Motor neuron (in vitro differentiated cells): ENCODE measurements at regions of chr3 and their contacts with region 1.

Region 1: GRCh38 chr3:50192689-50193141 is 1.3 kb downstream of the GNAT1 start:
- ATAC-seq: peak in 7 of 8 experiments; percentile 12 to 46 (median 32)
- H3K4me3 ChIP-seq: no peak overlapping the region
- H3K27ac ChIP-seq: no peak overlapping the region
- H3K4me1 ChIP-seq: peaks cover 0 to 11% of the 10 kb centered on the region in 2 donors

Region 2: GRCh38 chr3:49570028-49570654 is 622.6 kb before region 1 on chr3:
- in situ Hi-C with region 1: no loop called
- ATAC-seq: no peak
- H3K4me3 ChIP-seq: no peak overlapping the region
- H3K27ac ChIP-seq: no peak overlapping the region
- H3K4me1 ChIP-seq: no peaks in the 10 kb centered on the region

Region 3: GRCh38 chr3:49689046-49689907 is 503.4 kb before region 1 on chr3 and contains the starts of genes MST1 and RNF123:
- in situ Hi-C with region 1: no loop called
- ATAC-seq: peak; percentile 73 to 90 (median 84)
- H3K4me3 ChIP-seq: peak within 1 kb of the TSS; percentile 64 to 95 (median 66)
- H3K27ac ChIP-seq: peak within 1 kb of the TSS; percentile 46 to 67
- H3K4me1 ChIP-seq: peaks cover 8 to 9% of the 10 kb centered on the region in 2 donors
- total RNA-seq, gene MST1: 7.7 to 59.9 (median 26.0) TPM
- total RNA-seq, gene RNF123: 10.9 to 41.8 (median 16.2) TPM

Region 4: GRCh38 chr3:50112462-50112861 is 80.3 kb before region 1 on chr3:
- in situ Hi-C with region 1: loop called in 1 of 9 experiments (anchors 10 kb)
- ATAC-seq: peak in 7 of 8 experiments; percentile 30 to 99 (median 96)
- H3K4me3 ChIP-seq: no peak overlapping the region
- H3K27ac ChIP-seq: no peak overlapping the region
- H3K4me1 ChIP-seq: no peaks in the 10 kb centered on the region

Region 5: DNA sequence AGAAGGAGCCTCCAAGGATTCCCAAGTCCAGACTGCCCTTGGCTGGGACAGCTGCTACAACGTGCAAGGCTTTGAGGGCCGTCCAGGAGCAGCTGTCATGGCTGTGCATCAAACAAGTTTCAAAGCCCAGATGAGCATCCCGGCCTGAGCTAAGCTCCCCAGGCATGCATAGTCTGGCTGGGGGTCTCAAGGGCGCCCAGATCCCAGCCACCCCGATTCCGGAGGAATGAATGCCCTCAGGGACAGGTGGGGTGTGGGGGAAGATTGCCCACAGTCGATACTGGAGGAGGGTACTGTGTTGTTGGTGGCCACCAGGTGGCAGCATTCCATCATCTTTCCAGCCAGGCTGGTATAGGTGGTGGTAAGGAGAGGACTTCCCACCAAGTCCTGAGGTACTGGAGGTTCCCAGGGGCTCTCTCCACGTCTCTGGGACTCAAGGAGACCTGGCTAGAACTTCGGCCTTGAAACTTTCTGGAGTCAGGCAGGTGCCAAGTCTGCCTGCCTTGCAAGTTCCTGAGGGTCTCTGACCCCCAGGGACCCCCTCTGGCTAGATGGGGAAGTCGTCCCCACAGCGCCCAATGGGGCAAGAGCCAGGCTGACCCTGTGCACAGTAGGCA is 71.2 kb before region 1 on chr3:
- in situ Hi-C with region 1: loop called in 2 of 9 experiments (anchors 5 to 10 kb)
- ATAC-seq: peak; percentile 59 to 75 (median 69)
- H3K4me3 ChIP-seq: no peak overlapping the region
- H3K27ac ChIP-seq: no peak overlapping the region
- H3K4me1 ChIP-seq: peaks cover 20 to 39% of the 10 kb centered on the region in 2 donors

Region 6: DNA sequence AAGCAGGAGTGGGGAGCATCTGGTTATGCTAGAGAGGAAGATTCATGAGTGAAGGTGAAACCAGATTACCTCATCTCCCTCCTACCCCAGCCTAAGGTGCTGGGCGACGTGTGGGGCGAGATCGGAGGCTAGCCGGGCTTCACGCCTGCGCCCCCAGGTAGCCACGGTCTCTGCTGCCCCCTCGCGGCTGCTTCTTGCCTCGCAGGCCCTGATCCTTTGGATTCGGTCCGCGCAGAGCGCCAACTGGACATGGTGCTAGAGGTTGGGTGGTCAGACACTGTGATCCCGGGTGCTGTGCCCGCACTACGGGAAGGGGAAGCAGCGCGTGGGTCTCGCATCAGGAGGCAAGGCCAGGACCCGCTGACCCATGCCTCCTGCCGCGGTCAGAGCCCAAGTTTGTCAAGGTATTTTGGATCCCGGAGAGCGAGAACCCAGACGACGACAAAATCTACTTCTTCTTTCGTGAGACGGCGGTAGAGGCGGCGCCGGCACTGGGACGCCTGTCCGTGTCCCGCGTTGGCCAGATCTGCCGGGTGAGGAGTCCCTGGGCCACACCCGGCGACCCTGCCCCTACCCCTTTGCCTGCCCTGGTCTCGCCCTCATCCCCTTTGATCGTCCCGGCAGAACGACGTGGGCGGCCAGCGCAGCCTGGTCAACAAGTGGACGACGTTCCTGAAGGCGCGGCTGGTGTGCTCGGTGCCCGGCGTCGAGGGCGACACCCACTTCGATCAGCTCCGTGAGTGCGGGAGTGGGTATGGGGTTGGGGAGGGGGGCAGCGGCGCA is 80.4 kb after region 1 on chr3:
- in situ Hi-C with region 1: loop called in 2 of 9 experiments (anchors 10 kb)
- ATAC-seq: peak; percentile 39 to 85 (median 78)
- H3K4me3 ChIP-seq: peak overlapping the region in 2 of 5 donors; percentile 2 to 13
- H3K27ac ChIP-seq: no peak overlapping the region
- H3K4me1 ChIP-seq: peaks cover 9 to 22% of the 10 kb centered on the region in 2 donors